Activated CD4-positive, alpha-beta T cell treated with anti-CD3 and anti-CD28 coated beads for 36 hours (primary cell): ENCODE measurements at regions of chrX and their contacts with region 1.

Region 1: DNA sequence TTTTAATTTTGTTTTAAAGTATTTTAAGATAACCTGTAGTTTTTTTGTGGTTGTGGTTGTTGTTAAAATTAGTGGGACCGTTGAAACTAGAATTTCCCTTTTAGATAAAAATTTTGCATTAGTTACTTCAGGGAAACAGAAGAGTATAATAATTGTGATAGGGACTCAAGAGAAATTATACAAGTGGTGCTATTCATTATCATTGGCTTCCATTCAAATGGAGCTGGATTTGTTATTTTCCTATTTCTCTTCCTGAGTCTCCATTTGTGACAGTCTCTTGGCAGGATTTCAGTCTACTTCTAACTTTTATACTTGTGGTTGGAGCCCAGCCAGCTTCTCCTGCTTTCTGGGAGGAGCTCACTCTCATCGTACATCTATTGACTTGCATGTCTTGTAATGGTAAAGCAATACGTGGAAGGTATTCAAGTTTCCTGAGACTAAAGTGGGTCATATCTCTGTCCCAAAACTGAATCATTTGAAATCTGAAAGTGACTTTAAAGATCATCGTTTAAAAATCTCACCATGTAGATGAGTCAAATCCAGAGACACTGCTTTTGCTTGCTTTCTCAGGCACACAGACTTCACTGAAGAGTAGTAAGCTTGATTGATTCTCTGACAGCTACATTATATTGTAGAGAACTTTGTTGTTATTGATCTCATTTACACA is 155.8 kb downstream of the RPA4 start:
- DNase-seq: peak; percentile 30
- ATAC-seq: peak; percentile 93
- H3K4me3 Mint-ChIP-seq: no peak overlapping the region
- H3K27ac Mint-ChIP-seq: no peak overlapping the region
- H3K4me1 Mint-ChIP-seq: peaks cover 8% of the 10 kb centered on the region
- H3K27me3 Mint-ChIP-seq: no peaks in the 10 kb centered on the region

Region 2: GRCh38 chrX:96684339-96685209 is 354.9 kb before region 1 on chrX and contains the start of gene DIAPH2:
- CTCF ChIA-PET with region 1: no interaction called
- POLR2A ChIA-PET with region 1: no interaction called
- intact Hi-C with region 1: loop called in 1 of 2 experiments (anchors 10 kb)
- DNase-seq: peak; percentile 85
- ATAC-seq: peak; percentile 72
- H3K4me3 Mint-ChIP-seq: peak within 1 kb of the TSS; percentile 88
- H3K27ac Mint-ChIP-seq: peak within 1 kb of the TSS; percentile 94
- H3K4me1 Mint-ChIP-seq: peaks cover 29% of the 10 kb centered on the region
- H3K27me3 Mint-ChIP-seq: no peaks in the 10 kb centered on the region
- total RNA-seq, gene DIAPH2: 9.1 to 12.4 TPM

Region 3: DNA sequence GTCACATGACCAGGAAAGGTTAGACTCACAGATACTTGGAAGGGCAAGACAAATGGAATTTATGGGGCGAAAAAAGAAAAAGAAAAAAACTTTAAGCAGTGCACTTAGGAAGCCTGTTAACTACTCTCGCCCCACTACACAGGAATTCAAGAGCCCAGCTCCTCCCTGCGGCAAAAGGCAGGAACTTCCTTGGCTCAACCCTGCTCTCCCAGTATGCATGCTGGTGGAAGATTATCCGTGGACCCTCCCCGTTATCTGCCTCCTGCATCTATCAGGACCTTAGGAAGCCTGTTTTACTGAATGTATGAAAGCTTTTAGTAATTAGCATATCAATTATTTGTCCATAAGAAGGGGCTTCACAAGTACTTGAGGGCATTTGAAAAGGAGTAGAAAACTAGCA is 195.9 kb before region 1 on chrX:
- CTCF ChIA-PET with region 1: no interaction called
- POLR2A ChIA-PET with region 1: no interaction called
- intact Hi-C with region 1: no loop called
- DNase-seq: no peak
- ATAC-seq: no peak
- H3K4me3 Mint-ChIP-seq: no peak overlapping the region
- H3K27ac Mint-ChIP-seq: no peak overlapping the region
- H3K4me1 Mint-ChIP-seq: no peaks in the 10 kb centered on the region
- H3K27me3 Mint-ChIP-seq: no peaks in the 10 kb centered on the region

Region 4: GRCh38 chrX:97215186-97215585 is 175.7 kb after region 1 on chrX:
- CTCF ChIA-PET with region 1: no interaction called
- POLR2A ChIA-PET with region 1: no interaction called
- intact Hi-C with region 1: loop called (anchors 2 to 10 kb)
- DNase-seq: no peak
- ATAC-seq: no peak
- H3K4me3 Mint-ChIP-seq: no peak overlapping the region
- H3K27ac Mint-ChIP-seq: no peak overlapping the region
- H3K4me1 Mint-ChIP-seq: peaks cover 3% of the 10 kb centered on the region
- H3K27me3 Mint-ChIP-seq: no peaks in the 10 kb centered on the region

Region 5: GRCh38 chrX:97563531-97564133 is 524.1 kb after region 1 on chrX:
- CTCF ChIA-PET with region 1: no interaction called
- POLR2A ChIA-PET with region 1: no interaction called
- intact Hi-C with region 1: loop called in 1 of 2 experiments (anchors 10 kb)
- DNase-seq: peak; percentile 61
- ATAC-seq: peak; percentile 98
- H3K4me3 Mint-ChIP-seq: peak overlapping the region; percentile 59
- H3K27ac Mint-ChIP-seq: peak overlapping the region; percentile 79
- H3K4me1 Mint-ChIP-seq: peaks cover 10% of the 10 kb centered on the region
- H3K27me3 Mint-ChIP-seq: no peaks in the 10 kb centered on the region